CD8-positive, alpha-beta T cell (primary cell): ENCODE measurements at regions of chr7 and their contacts with region 1.

Region 1: DNA sequence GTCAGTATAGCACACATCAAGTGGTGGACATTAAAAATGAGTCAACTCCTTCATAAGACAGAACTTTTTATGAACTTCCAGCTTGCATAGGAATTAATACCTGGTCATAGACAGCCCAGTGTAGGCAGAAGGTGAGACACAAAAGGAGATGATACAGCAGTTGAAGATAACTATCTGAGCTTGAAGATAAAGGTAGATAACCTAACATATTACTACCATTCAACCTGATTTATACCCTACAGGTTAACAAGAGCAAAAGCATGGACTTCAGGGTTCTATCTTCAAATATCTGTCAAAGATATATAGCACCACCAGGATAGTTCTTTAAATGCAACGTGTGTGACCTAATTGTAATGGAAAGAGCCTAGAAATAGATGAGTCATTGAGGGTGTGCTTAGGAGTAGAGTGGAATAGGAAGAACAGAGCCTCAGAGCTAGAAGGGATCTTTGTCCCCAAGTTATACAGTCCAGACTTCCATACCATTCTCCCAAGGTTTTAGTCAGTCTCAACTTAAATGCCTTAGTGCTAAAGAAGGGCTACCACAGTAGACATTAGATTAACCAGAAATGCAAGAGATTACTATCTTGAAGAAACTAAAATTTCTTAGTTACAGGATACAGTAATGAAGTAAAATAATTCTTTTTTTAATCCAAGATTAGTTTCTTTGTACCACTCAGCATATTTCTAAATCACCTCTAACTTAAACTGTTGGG is 9.2 kb downstream of the ZNF800 start:
- DNase-seq: no peak
- ATAC-seq: no peak
- H3K4me3 ChIP-seq: no peak overlapping the region
- H3K4me3 Mint-ChIP-seq: no peak overlapping the region
- H3K27ac ChIP-seq: no peak overlapping the region
- H3K27ac Mint-ChIP-seq: peak overlapping the region; percentile 45
- H3K4me1 ChIP-seq: peaks cover 51% of the 10 kb centered on the region
- H3K4me1 Mint-ChIP-seq: peaks cover 78% of the 10 kb centered on the region
- H3K27me3 ChIP-seq: no peaks in the 10 kb centered on the region
- H3K27me3 Mint-ChIP-seq: no peaks in the 10 kb centered on the region
- CTCF ChIP-seq: no peak

Region 2: DNA sequence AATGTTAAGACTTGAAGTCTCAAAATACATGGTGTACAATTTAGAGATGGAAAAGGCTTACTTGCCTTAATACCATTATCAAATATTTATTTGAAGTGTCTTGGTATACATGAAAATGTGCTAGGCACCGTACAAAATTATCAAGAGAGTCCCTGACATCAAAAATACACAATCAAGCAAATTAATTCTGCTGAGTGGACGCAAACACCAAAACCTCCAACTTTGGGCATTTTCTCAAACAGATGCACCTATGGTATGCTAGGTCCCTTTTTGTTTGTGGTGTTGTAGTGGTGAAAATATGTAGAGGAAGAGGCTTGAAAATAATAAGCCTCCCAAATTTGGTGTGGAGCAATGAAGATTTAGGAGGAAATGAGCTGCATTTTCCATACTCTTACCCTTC is 15.6 kb before region 1 on chr7:
- CTCF ChIA-PET with region 1: interaction called, 3 read pairs
- POLR2A ChIA-PET with region 1: no interaction called
- intact Hi-C with region 1: loop called in 1 of 2 experiments (anchors 2 kb)
- DNase-seq: no peak
- ATAC-seq: no peak
- H3K4me3 ChIP-seq: no peak overlapping the region
- H3K4me3 Mint-ChIP-seq: no peak overlapping the region
- H3K27ac ChIP-seq: no peak overlapping the region
- H3K27ac Mint-ChIP-seq: no peak overlapping the region
- H3K4me1 ChIP-seq: no peaks in the 10 kb centered on the region
- H3K4me1 Mint-ChIP-seq: peaks cover 39% of the 10 kb centered on the region
- H3K27me3 ChIP-seq: no peaks in the 10 kb centered on the region
- H3K27me3 Mint-ChIP-seq: no peaks in the 10 kb centered on the region
- CTCF ChIP-seq: no peak